Right ventricle myocardium superior (tissue), 1 donor: ENCODE measurements at regions of chr4 and their contacts with region 1.

Region 1: GRCh38 chr4:15729910-15730533 is 27.2 kb downstream of the BST1 start:
- DNase-seq: no peak
- ATAC-seq: peak; percentile 61

Region 2: GRCh38 chr4:15956179-15956850 is 226.3 kb after region 1 on chr4:
- intact Hi-C with region 1: loop called (anchors 5 kb)
- DNase-seq: peak; percentile 80
- ATAC-seq: peak; percentile 94